ENCODE measurements at regions of chr20 and their contacts with region 1.

Region 1: GRCh38 chr20:17898548-17898994 is 70.0 kb downstream of the SNX5 start:
- DNase-seq: peak; percentile 90
- H3K4me3 ChIP-seq: no peak overlapping the region
- H3K27ac ChIP-seq: no peak overlapping the region
- H3K4me1 ChIP-seq: peaks cover 24% of the 10 kb centered on the region
- H3K27me3 ChIP-seq: no peaks in the 10 kb centered on the region
- CTCF ChIP-seq: peak; percentile 92 to 95 (median 95)
- POLR2A ChIP-seq: no peak

Region 2: DNA sequence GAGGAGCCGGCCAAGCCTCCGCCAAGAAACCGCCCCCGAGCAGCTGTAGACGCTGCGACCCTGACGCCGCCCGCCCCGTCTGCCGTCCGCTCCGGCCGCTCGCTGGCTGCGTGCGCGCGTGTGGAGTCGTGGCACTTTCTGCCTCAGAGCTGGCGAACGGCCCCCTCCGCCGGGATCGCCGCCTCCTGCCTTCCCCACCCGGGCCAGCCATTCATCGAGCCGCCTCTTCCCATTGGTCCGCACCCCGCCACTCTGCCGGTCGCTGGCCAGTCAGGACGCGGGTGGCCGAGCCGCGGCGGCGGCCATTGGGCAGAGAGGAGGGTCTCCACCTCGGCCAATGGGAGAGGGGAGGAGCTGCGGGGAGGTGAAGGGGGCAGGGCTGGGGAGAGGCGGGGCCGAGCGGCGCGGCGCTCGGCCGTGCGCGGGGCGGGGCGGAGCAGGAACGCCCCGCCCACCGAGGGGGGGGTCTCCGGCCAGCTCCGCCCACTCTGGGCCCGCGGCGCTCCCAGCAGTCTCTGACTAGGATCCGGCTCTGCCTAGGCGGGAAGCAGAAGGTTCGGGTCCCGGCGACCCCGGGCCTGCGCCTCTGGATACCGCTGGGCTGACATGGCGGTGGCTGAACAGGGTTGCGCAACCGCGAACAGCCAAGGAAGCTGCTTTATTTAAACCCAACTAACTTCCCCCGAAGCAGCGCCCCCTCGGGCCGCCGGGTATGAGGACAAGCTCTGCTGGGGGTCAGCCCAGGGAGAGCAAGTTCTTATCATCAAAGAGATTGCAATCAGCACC is 216.3 kb before region 1 on chr20 and contains the start of gene RRBP1:
- intact Hi-C with region 1: loop called (anchors 5 kb)
- DNase-seq: peak; percentile 99
- H3K4me3 ChIP-seq: peak within 1 kb of the TSS; percentile 68 to 87
- H3K27ac ChIP-seq: peak within 1 kb of the TSS; percentile 76 to 89
- H3K4me1 ChIP-seq: peaks cover 16% of the 10 kb centered on the region
- H3K27me3 ChIP-seq: no peaks in the 10 kb centered on the region
- CTCF ChIP-seq: peak; percentile 60 to 77 (median 70)
- POLR2A ChIP-seq: peak; percentile 74
- total RNA-seq, gene RRBP1: 144 to 146 TPM

Region 3: DNA sequence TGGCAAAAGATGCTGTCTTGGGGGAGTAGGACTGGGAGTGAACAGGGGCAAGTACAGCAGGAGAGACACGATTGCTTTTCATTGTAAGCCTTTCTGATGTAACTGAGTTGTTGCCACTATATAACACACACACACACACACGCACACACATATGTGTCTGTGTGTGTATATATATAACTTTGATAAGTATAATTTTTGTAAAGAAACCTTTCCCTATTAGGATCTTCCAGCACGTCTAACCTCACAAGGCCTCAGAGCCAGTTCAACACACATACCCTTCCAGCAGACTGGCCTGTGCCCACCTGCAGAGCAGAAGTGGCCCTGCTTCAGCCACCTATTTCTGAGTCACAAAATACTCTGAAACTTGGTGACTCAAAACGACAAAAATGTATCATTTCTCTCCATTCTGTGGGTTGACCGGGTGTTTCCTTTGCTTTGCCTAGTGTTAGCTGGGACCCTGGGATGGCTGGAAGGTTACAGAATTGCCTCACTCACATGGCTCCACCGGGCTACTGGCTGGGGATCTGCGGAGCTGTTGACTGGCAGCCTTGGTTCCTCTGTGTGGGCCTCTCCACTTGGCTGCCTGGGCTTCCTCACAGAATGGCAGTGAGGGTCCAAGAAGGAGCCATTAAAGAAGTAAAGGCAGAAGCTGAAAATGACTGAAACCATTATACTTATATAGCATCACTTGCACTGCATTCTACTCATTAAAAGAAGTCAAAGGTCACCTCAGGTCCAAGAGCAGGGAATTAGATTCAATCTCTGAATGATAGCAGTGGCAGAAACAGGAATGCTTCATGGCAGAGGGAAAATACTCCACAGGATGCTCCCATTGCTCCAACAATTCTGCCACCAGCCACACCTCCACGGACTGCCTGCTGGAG is 72.4 kb before region 1 on chr20:
- intact Hi-C with region 1: no loop called
- DNase-seq: no peak
- H3K4me3 ChIP-seq: no peak overlapping the region
- H3K27ac ChIP-seq: no peak overlapping the region
- H3K4me1 ChIP-seq: no peaks in the 10 kb centered on the region
- H3K27me3 ChIP-seq: no peaks in the 10 kb centered on the region
- CTCF ChIP-seq: no peak
- POLR2A ChIP-seq: no peak

Region 4: GRCh38 chr20:17938871-17939619 is 40.5 kb after region 1 on chr20:
- intact Hi-C with region 1: no loop called
- DNase-seq: peak; percentile 71
- H3K4me3 ChIP-seq: no peak overlapping the region
- H3K27ac ChIP-seq: no peak overlapping the region
- H3K4me1 ChIP-seq: peaks cover 24% of the 10 kb centered on the region
- H3K27me3 ChIP-seq: no peaks in the 10 kb centered on the region
- CTCF ChIP-seq: peak; percentile 75 to 83 (median 82)
- POLR2A ChIP-seq: no peak

Region 5: GRCh38 chr20:18324596-18325089 is 426.1 kb after region 1 on chr20:
- intact Hi-C with region 1: no loop called
- DNase-seq: no peak
- H3K4me3 ChIP-seq: no peak overlapping the region
- H3K27ac ChIP-seq: no peak overlapping the region
- H3K4me1 ChIP-seq: no peaks in the 10 kb centered on the region
- H3K27me3 ChIP-seq: no peaks in the 10 kb centered on the region
- CTCF ChIP-seq: no peak
- POLR2A ChIP-seq: no peak

Measured in testis (tissue), 5 donors.